Caco-2 (cell line): ENCODE measurements at regions of chr1 and their contacts with region 1.

Region 1: GRCh38 chr1:145845514-145846161 is at the start of gene NUDT17:
- DNase-seq: peak; percentile 81 to 84
- H3K4me3 ChIP-seq: peak within 1 kb of the TSS; percentile 61
- H3K4me3 Mint-ChIP-seq: no peak within 1 kb of the TSS
- H3K27ac Mint-ChIP-seq: no peak within 1 kb of the TSS
- H3K4me1 ChIP-seq: peaks cover 7% of the 10 kb centered on the region
- H3K4me1 Mint-ChIP-seq: no peaks in the 10 kb centered on the region
- H3K27me3 ChIP-seq: no peaks in the 10 kb centered on the region
- H3K27me3 Mint-ChIP-seq: no peaks in the 10 kb centered on the region
- CTCF ChIP-seq: peak; percentile 91 to 96
- total RNA-seq, gene NUDT17: 4.8 and 6.4 TPM in 2 replicates

Region 2: GRCh38 chr1:145782166-145783099 is 63.2 kb before region 1 on chr1:
- CTCF ChIA-PET with region 1: no interaction called
- POLR2A ChIA-PET with region 1: no interaction called
- intact Hi-C with region 1: no loop called
- DNase-seq: peak in 1 of 2 experiments; percentile 21
- H3K4me3 ChIP-seq: no peak overlapping the region
- H3K4me3 Mint-ChIP-seq: peak overlapping the region; percentile 49
- H3K27ac Mint-ChIP-seq: peak overlapping the region; percentile 93
- H3K4me1 ChIP-seq: peaks cover 51% of the 10 kb centered on the region
- H3K4me1 Mint-ChIP-seq: peaks cover 41% of the 10 kb centered on the region
- H3K27me3 ChIP-seq: no peaks in the 10 kb centered on the region
- H3K27me3 Mint-ChIP-seq: no peaks in the 10 kb centered on the region
- CTCF ChIP-seq: no peak

Region 3: DNA sequence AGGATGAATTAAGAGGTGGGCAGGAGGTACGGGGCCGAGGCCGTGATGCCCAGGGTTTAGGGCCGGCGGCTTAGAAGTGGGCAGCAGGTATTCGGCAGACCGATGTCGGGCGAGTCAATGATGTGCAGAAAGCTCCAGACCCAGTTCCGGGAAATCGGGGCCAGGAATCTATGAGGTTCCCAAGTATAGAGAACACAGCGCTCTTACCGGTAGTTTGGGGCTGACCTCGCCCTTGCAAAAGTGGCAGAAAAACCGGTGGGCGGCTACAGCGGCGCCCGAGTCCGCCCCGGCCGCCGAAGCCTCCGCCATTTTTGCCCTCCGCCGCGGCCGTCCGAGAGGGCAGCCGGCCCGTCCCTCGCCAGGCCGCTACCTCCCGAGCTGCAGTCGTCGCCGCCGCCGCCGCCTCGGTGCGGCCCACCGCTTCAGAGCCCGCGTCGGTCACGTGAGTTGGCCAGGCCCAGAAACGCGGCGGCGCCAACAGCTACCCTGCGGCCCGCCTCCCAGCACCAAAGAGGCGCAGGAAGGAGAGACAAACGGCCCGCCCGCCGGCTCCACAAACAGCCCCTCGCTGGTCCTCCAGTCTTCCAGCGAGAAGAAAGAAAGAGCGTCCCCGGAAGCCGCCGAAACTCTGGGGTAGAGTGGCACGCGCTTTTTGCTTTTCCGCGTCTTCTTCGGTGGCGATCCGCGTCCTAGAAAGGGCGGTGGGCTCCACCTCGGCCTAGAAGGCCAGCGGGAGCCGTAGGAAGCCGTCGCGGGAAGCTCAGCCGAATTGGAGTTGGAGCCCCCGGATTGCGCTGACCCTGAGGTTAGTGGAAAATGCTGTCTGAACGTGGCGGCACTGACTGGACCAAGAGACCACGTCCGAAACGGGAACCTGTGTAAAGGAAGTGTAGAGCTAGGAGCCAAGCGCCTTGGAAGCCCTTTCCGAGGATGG is 21.8 kb before region 1 on chr1 and contains the starts of genes POLR3C and RNF115:
- CTCF ChIA-PET with region 1: interaction called, 11 read pairs
- POLR2A ChIA-PET with region 1: no interaction called
- intact Hi-C with region 1: no loop called
- DNase-seq: peak; percentile 90 to 93
- H3K4me3 ChIP-seq: peak within 1 kb of the TSS; percentile 64
- H3K4me3 Mint-ChIP-seq: peak within 1 kb of the TSS; percentile 98
- H3K27ac Mint-ChIP-seq: peak within 1 kb of the TSS; percentile 97
- H3K4me1 ChIP-seq: no peaks in the 10 kb centered on the region
- H3K4me1 Mint-ChIP-seq: no peaks in the 10 kb centered on the region
- H3K27me3 ChIP-seq: no peaks in the 10 kb centered on the region
- H3K27me3 Mint-ChIP-seq: no peaks in the 10 kb centered on the region
- CTCF ChIP-seq: no peak
- total RNA-seq, gene POLR3C: 48.0 and 48.8 TPM in 2 replicates
- total RNA-seq, gene RNF115: 16.6 and 17.5 TPM in 2 replicates

Region 4: DNA sequence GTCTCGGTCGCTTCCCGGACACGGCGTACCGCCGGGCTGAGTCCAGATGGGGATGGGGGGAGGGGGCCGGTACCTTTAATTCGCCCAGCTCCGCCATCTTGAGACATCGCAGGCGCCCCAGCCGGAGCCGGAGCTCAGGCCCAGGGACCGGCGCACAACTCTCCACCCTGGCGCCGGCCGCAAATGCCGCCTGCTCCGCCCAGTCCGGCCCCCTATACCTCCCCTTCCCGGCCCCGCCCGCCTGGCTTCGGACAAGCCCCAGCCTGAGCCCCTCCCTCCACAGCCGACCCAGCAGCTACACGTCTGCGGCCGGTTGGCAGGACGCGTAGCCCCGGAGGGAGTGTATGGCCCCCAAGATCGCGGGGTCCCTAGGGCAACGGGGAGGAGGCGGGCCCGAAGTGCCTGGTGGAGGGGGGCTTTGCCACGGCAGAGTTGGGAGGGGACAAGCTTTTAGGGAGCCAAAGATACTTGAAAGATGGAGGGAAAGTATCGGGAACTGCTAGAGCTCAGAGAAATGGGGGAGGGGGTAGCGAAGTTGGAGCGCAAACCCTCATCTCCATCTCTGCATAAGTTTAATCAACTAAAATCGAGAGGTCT is 13.4 kb after region 1 on chr1 and contains the start of gene PIAS3:
- CTCF ChIA-PET with region 1: interaction called, 136 read pairs
- POLR2A ChIA-PET with region 1: interaction called, 30 read pairs
- intact Hi-C with region 1: loop called (anchors 1 kb)
- DNase-seq: peak; percentile 96 to 97
- H3K4me3 ChIP-seq: peak within 1 kb of the TSS; percentile 85
- H3K4me3 Mint-ChIP-seq: peak within 1 kb of the TSS; percentile 92
- H3K27ac Mint-ChIP-seq: peak within 1 kb of the TSS; percentile 78
- H3K4me1 ChIP-seq: peaks cover 3% of the 10 kb centered on the region; the same call in 1 of the 2 replicates
- H3K4me1 Mint-ChIP-seq: peaks cover 7% of the 10 kb centered on the region
- H3K27me3 ChIP-seq: no peaks in the 10 kb centered on the region
- H3K27me3 Mint-ChIP-seq: no peaks in the 10 kb centered on the region
- CTCF ChIP-seq: no peak
- total RNA-seq, gene PIAS3: 20.3 and 22.0 TPM in 2 replicates

Region 5: DNA sequence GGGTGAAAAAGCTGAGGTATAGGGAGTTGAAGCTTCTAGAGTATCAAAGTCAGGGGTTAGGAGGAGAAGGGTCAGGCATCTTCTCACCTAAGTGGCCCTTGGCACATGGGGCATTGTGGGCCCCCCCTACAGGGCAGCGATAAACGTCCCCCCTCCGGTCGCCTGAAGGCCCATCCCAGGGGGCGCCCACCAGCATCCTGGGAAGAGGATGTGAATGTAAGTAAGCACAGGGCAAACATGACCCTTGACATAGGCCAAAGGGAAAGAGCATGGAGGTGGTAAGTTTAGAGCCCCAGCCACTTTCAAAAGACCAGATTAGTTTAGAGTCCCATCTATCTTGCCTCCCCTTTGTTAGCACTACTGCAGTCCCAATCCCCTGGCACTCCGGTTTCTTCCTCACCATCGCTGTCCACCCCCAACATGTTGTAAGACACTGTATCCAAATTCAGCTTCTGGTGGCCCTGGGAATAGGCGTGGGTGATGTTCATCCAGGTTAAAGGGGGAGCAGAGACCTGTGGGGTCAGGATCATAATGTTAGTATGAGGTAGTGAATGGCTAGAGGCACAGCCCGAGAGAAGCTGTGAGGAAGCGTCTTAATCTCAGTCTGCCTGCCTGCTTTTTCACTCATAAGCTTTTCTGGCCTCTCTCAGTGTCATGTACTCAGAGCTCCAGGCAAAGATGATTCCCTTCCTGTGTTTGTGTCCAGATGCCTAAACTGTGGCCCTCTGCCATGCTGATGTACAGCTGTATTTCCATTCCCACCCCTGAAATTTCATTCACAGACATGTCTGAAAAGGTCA is 61.5 kb after region 1 on chr1:
- CTCF ChIA-PET with region 1: interaction called, 3 read pairs
- POLR2A ChIA-PET with region 1: no interaction called
- intact Hi-C with region 1: loop called (anchors 1 kb)
- DNase-seq: no peak
- H3K4me3 ChIP-seq: no peak overlapping the region
- H3K4me3 Mint-ChIP-seq: no peak overlapping the region
- H3K27ac Mint-ChIP-seq: no peak overlapping the region
- H3K4me1 ChIP-seq: no peaks in the 10 kb centered on the region
- H3K4me1 Mint-ChIP-seq: no peaks in the 10 kb centered on the region
- H3K27me3 ChIP-seq: no peaks in the 10 kb centered on the region
- H3K27me3 Mint-ChIP-seq: no peaks in the 10 kb centered on the region
- CTCF ChIP-seq: no peak

Region 6: GRCh38 chr1:146012737-146013403 is 167.2 kb after region 1 on chr1:
- CTCF ChIA-PET with region 1: interaction called, 3 read pairs
- POLR2A ChIA-PET with region 1: no interaction called
- intact Hi-C with region 1: loop called (anchors 2 kb)
- DNase-seq: peak in 1 of 2 experiments; percentile 65
- H3K4me3 ChIP-seq: no peak overlapping the region
- H3K4me3 Mint-ChIP-seq: no peak overlapping the region
- H3K27ac Mint-ChIP-seq: no peak overlapping the region
- H3K4me1 ChIP-seq: no peaks in the 10 kb centered on the region
- H3K4me1 Mint-ChIP-seq: peaks cover 8% of the 10 kb centered on the region
- H3K27me3 ChIP-seq: no peaks in the 10 kb centered on the region
- H3K27me3 Mint-ChIP-seq: peaks cover 7% of the 10 kb centered on the region
- CTCF ChIP-seq: peak; percentile 50 to 81

Region 7: DNA sequence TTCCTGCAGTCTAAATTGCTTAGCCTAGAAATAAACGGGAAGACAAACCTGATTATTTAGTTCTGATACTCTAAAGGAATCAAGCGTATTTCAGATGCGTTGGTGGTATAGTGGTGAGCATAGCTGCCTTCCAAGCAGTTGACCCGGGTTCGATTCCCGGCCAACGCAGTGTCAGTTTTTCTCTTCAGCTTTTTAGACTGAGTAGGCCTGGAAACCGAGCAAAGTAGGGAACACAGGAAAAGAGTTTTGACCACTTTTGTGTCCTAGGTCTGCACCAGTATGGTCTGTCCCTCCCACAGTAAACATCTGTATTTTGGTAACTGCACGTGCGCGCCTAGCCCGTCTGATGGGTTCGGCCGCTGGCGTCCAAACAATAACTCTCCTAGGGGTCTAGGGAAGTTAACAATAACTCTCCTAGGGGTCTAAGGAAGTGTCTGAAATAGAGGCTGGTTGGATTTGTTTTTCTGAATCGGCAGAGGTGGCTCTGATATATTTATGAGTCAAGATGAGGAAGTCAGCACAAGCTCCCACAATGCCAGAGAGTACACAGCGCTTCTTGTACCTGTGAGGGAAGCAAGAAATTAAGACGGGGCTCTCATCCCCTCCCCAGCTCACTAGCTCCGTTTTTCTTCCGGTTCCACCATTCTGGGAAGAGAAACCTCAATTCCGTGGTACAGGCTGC is 191.5 kb after region 1 on chr1:
- CTCF ChIA-PET with region 1: no interaction called
- POLR2A ChIA-PET with region 1: no interaction called
- intact Hi-C with region 1: no loop called
- DNase-seq: peak; percentile 84 to 90
- H3K4me3 ChIP-seq: peak overlapping the region; percentile 82
- H3K4me3 Mint-ChIP-seq: peak overlapping the region; percentile 92
- H3K27ac Mint-ChIP-seq: peak overlapping the region; percentile 100
- H3K4me1 ChIP-seq: 0 out of 2 replicates have a peak, but pooled peaks cover 3% of the 10 kb centered on the region
- H3K4me1 Mint-ChIP-seq: peaks cover 13% of the 10 kb centered on the region
- H3K27me3 ChIP-seq: no peaks in the 10 kb centered on the region
- H3K27me3 Mint-ChIP-seq: peaks cover 8% of the 10 kb centered on the region
- CTCF ChIP-seq: no peak